ENCODE measurements at regions of chr18 and their contacts with region 1.

Region 1: GRCh38 chr18:54392543-54393023 is 34.9 kb downstream of the C18orf54 start:
- DNase-seq: peak in 1 of 2 experiments; percentile 36
- H3K4me3 ChIP-seq: no peak overlapping the region
- H3K4me3 Mint-ChIP-seq: no peak overlapping the region
- H3K27ac Mint-ChIP-seq: no peak overlapping the region
- H3K4me1 ChIP-seq: peaks cover 8% of the 10 kb centered on the region
- H3K4me1 Mint-ChIP-seq: peaks cover 9% of the 10 kb centered on the region
- H3K27me3 ChIP-seq: no peaks in the 10 kb centered on the region
- H3K27me3 Mint-ChIP-seq: no peaks in the 10 kb centered on the region
- CTCF ChIP-seq: peak; percentile 32 to 39

Region 2: GRCh38 chr18:54232485-54233227 is 159.9 kb before region 1 on chr18:
- CTCF ChIA-PET with region 1: no interaction called
- POLR2A ChIA-PET with region 1: no interaction called
- intact Hi-C with region 1: no loop called
- DNase-seq: no peak
- H3K4me3 ChIP-seq: no peak overlapping the region
- H3K4me3 Mint-ChIP-seq: no peak overlapping the region
- H3K27ac Mint-ChIP-seq: no peak overlapping the region
- H3K4me1 ChIP-seq: no peaks in the 10 kb centered on the region
- H3K4me1 Mint-ChIP-seq: peaks cover 21% of the 10 kb centered on the region
- H3K27me3 ChIP-seq: no peaks in the 10 kb centered on the region
- H3K27me3 Mint-ChIP-seq: no peaks in the 10 kb centered on the region
- CTCF ChIP-seq: no peak

Region 3: DNA sequence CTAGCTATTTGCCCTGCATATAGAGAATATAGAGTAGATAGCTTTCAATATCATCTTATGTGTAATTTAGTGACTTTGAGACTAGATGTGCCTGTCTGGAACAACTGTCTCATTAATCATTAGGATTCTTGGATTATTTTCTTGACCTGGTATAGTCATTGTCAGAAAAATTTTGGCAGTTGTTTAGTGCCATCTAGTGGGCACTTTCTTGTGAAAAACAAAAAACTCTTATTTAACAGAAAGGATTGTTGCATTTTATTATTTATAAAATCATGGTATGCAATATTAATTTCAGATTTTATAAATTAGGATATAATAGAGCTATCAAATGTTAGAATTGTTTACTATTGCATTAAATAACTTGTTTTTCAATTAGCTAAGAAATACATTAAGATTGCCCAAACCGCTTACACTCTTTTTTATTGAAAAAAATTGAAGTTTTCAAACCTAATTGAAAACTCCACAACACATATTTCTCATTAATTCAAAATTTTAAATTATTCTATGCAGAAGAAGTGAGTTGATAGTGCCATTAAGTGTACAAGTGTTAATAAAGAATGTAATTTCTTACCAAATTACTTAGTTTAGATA is 278.8 kb after region 1 on chr18:
- CTCF ChIA-PET with region 1: no interaction called
- POLR2A ChIA-PET with region 1: no interaction called
- intact Hi-C with region 1: loop called (anchors 2 kb)
- DNase-seq: peak in 1 of 2 experiments; percentile 5
- H3K4me3 ChIP-seq: no peak overlapping the region
- H3K4me3 Mint-ChIP-seq: no peak overlapping the region
- H3K27ac Mint-ChIP-seq: no peak overlapping the region
- H3K4me1 ChIP-seq: peaks cover 8% of the 10 kb centered on the region
- H3K4me1 Mint-ChIP-seq: peaks cover 7% of the 10 kb centered on the region
- H3K27me3 ChIP-seq: no peaks in the 10 kb centered on the region
- H3K27me3 Mint-ChIP-seq: no peaks in the 10 kb centered on the region
- CTCF ChIP-seq: peak; percentile 4 to 26